GM13976 (cell line): ENCODE measurements at regions of chr14 and their contacts with region 1.

Region 1: DNA sequence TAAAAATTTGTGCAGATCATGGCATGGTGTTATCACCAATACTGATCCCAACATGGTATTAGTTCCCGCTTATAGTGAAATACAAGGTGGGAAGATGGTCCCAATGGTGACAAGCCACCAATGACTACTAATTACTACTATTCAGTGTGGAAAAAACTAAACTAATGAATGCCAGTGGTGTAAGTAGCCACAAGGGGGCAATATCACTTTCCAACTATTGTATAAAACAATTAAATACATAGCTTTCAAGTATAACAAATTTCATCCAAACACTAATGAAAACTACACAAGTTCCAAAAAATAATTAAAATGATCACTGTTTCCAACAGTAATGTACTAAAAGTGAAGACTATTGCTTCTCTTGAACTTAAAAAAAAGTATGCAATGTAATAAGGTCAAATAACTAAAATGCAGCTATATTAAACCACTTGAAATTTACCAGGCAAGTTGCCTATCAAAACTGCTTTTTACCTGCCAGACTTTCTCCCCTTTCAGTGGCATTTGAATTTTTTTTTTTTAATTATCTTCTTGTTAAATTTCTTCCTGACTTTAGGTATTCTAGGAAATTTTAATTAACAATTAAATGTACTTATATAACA is 58.0 kb downstream of the PAPLN start:
- DNase-seq: peak; percentile 55
- CTCF ChIP-seq: peak; percentile 45

Region 2: GRCh38 chr14:73125169-73125588 is 170.1 kb before region 1 on chr14:
- in situ Hi-C with region 1: no loop called
- DNase-seq: no peak
- CTCF ChIP-seq: no peak

Region 3: GRCh38 chr14:73245401-73246325 is 49.6 kb before region 1 on chr14:
- in situ Hi-C with region 1: no loop called
- DNase-seq: peak; percentile 81
- CTCF ChIP-seq: no peak

Region 4: GRCh38 chr14:73463411-73463810 is 168.1 kb after region 1 on chr14:
- in situ Hi-C with region 1: loop called (anchors 10 kb)
- DNase-seq: no peak
- CTCF ChIP-seq: no peak